Lower leg skin (tissue), 4 donors: ENCODE measurements at regions of chr17 and their contacts with region 1.

Region 1: GRCh38 chr17:76279742-76280287 is 14.7 kb downstream of the UBALD2 start:
- DNase-seq: no peak
- H3K4me3 ChIP-seq: no peak overlapping the region
- CTCF ChIP-seq: no peak
- POLR2A ChIP-seq: no peak

Region 2: GRCh38 chr17:76121932-76122430 is 157.8 kb before region 1 on chr17:
- intact Hi-C with region 1: loop called (anchors 5 kb)
- DNase-seq: no peak
- H3K4me3 ChIP-seq: no peak overlapping the region
- CTCF ChIP-seq: no peak
- POLR2A ChIP-seq: no peak